Activated CD8-positive, alpha-beta memory T cell treated with anti-CD3 and anti-CD28 coated beads, Interleukin-2, amount 10 ng/mL, durations not matched to agents 7 days and 5 days (primary cell): ENCODE measurements at regions of chr3 and their contacts with region 1.

Region 1: GRCh38 chr3:157136647-157137387 is 23.1 kb downstream of the CCNL1 start:
- DNase-seq: peak; percentile 39
- ATAC-seq: peak; percentile 5
- H3K4me3 Mint-ChIP-seq: no peak overlapping the region
- H3K27ac Mint-ChIP-seq: peak overlapping the region; percentile 93
- H3K4me1 Mint-ChIP-seq: peaks cover 59% of the 10 kb centered on the region
- H3K27me3 Mint-ChIP-seq: no peaks in the 10 kb centered on the region

Region 2: DNA sequence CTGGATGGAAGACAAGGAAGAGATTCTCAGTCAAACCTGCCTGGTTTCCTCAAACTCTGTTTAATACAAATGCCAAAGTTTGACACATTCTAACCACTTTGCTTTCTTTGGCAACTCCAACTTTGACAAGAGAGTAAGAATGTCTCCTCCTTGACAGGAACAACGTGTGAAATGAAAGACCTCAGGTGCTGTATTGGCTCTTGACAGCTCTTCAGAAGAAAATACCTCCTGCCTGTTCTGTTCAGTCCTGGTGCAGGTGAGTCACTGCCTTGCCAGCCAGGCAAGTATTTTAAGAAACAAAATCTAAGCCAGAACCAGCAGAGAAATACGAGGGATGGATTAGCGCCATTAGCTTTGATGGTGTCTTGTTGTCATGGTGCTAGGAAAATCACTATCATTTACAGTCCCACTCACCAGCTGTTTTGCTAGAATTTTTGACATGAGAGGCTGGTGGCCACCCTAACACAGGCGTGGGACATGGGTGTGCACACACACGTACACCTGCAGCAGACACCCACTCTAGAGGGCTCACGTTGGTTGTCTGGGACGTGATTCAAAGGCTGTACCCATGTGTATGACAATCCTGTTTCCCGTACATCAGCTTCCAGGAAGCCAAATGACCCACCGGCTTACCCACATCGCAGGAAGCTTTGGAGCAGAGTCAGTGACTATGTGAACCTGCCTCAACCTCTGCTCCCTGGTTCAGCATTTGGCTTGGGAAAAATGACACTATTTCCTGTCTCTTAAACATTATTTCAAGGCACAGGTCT is 37.3 kb before region 1 on chr3:
- CTCF ChIA-PET with region 1: interaction called, 332 read pairs
- DNase-seq: no peak
- ATAC-seq: no peak
- H3K4me3 Mint-ChIP-seq: no peak overlapping the region
- H3K27ac Mint-ChIP-seq: peak overlapping the region; percentile 52
- H3K4me1 Mint-ChIP-seq: peaks cover 59% of the 10 kb centered on the region
- H3K27me3 Mint-ChIP-seq: no peaks in the 10 kb centered on the region

Region 3: GRCh38 chr3:157122116-157122515 is 14.7 kb before region 1 on chr3:
- CTCF ChIA-PET with region 1: interaction called, 15 read pairs
- DNase-seq: no peak
- ATAC-seq: no peak
- H3K4me3 Mint-ChIP-seq: no peak overlapping the region
- H3K27ac Mint-ChIP-seq: no peak overlapping the region
- H3K4me1 Mint-ChIP-seq: peaks cover 26% of the 10 kb centered on the region
- H3K27me3 Mint-ChIP-seq: no peaks in the 10 kb centered on the region

Region 4: DNA sequence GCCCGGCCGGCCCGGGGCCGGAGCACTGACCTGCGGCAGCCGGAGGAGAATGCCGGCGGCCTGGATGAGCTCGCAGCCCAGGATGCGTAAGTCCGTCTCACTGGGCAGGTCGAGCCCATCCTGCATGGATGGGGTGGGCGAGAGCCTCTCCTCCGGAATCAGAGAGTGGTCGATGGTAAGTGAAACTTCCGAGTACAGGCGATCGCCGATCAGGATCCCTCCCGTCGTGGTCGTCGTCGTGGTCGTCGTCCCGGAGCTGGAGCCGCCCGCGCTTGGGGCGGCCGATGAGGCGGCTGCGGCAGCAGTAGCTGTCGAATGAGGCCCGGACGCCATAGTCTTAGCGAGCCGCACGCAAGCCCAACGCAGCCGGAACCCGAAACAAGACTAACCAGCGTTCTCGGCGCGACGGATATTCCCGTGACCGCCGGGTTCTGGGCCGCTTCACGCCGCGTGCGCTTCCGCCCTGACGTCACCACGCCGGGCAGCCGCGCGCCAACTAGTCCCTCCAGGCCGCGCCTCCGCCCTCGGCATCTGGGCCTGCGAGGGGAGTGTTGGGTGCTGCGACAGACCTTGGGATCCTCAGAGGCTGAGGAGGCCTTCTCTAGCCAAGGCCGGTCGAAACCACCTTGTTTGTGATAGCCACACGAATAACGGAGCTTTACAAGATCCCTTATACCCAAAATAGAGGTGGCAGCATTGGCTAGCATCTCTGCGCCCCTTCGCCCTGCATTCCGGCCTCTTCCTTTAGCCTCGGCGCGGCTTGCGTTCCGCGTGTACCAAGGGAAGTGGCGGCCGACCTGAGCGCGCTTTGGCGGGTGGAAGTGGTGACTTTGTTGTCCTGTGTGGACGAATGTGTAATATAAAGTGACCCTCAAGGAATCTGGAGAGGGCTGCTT is 23.2 kb after region 1 on chr3 and contains the start of gene CCNL1:
- CTCF ChIA-PET with region 1: interaction called, 23 read pairs
- DNase-seq: peak; percentile 96
- ATAC-seq: peak; percentile 80
- H3K4me3 Mint-ChIP-seq: peak within 1 kb of the TSS; percentile 94
- H3K27ac Mint-ChIP-seq: peak within 1 kb of the TSS; percentile 98
- H3K4me1 Mint-ChIP-seq: peaks cover 42% of the 10 kb centered on the region
- H3K27me3 Mint-ChIP-seq: no peaks in the 10 kb centered on the region
- total RNA-seq, gene CCNL1: 166 to 254 TPM

Region 5: DNA sequence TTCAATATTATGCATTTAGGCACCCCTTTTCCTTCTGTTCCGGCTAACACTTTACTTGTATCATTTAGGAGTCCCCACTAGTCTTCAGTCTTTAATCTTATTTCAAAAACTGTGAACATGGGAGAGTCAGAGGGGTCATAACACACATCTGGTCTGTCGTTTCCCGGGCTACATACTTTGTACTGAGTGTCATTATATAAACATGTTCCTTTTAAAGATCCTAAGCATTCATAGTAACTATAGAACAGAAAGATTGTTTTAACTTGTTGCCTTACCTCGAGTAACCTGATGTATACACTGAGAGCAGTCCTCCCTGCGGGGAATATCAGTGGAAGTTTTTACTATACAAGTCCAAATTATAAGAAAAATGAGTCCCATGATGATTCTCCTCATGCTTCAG is 444.6 kb after region 1 on chr3:
- CTCF ChIA-PET with region 1: no interaction called
- DNase-seq: no peak
- ATAC-seq: no peak
- H3K4me3 Mint-ChIP-seq: no peak overlapping the region
- H3K27ac Mint-ChIP-seq: no peak overlapping the region
- H3K4me1 Mint-ChIP-seq: no peaks in the 10 kb centered on the region
- H3K27me3 Mint-ChIP-seq: peaks cover 5% of the 10 kb centered on the region